ENCODE measurements at regions of chr16 and their contacts with region 1.

Region 1: GRCh38 chr16:68085259-68086071 is at the start of gene NFATC3:
- DNase-seq: peak; percentile 99 to 100
- ATAC-seq: peak; percentile 96
- H3K4me3 ChIP-seq: peak within 1 kb of the TSS; percentile 78 to 81
- H3K27ac ChIP-seq: peak within 1 kb of the TSS; percentile 88 to 93
- H3K4me1 ChIP-seq: no peaks in the 10 kb centered on the region
- H3K27me3 ChIP-seq: no peaks in the 10 kb centered on the region
- total RNA-seq, gene NFATC3: 38.1 to 48.4 TPM

Region 2: GRCh38 chr16:68040507-68041288 is 44.8 kb before region 1 on chr16:
- intact Hi-C with region 1: no loop called
- DNase-seq: peak; percentile 85 to 95
- ATAC-seq: peak; percentile 93
- H3K4me3 ChIP-seq: no peak overlapping the region
- H3K27ac ChIP-seq: no peak overlapping the region
- H3K4me1 ChIP-seq: no peaks in the 10 kb centered on the region
- H3K27me3 ChIP-seq: no peaks in the 10 kb centered on the region

Region 3: DNA sequence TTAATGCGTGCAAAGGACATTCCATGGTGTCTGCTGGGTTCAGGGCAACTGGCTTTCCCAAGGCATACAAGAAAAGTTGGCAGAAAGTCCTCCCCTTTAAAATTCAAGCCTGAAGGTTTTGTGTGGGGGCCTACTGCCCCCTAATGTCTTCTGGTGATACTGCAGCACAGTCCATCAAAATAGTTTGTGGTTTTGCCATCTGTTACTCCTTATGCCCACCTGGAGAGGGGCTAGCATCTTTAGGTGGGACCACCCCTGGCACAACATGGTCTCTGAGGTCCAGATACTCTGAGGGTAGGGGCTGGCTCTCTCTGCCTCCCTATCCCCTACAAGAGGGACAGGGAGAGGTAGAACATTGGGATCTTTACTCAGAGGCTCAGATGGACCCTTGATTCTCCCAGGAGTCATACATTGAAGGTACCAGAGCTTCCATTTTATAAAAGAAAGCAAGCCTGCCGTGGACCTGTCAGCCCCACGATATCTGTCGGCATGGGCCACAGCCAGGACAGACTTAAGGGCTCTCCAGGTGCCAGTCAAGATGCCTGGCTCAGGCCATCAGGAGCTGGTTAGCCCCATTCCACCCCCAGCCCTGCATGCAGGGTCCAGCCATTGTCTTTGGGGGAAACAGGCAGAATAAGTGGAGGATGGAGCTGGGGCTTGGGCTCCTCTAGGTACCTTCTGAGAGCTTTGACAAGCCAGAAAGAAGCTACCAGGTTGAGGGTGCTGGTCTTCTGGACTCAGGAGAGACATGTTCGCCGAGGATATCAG is 144.2 kb after region 1 on chr16:
- intact Hi-C with region 1: loop called (anchors 5 to 10 kb)
- DNase-seq: peak in 1 of 2 donors; percentile 43
- ATAC-seq: peak; percentile 53
- H3K4me3 ChIP-seq: no peak overlapping the region
- H3K27ac ChIP-seq: no peak overlapping the region
- H3K4me1 ChIP-seq: no peaks in the 10 kb centered on the region
- H3K27me3 ChIP-seq: no peaks in the 10 kb centered on the region

Region 4: GRCh38 chr16:68237243-68238028 is 152.0 kb after region 1 on chr16:
- intact Hi-C with region 1: loop called (anchors 5 to 10 kb)
- DNase-seq: peak; percentile 99
- ATAC-seq: peak; percentile 94
- H3K4me3 ChIP-seq: peak overlapping the region; percentile 7 to 29
- H3K27ac ChIP-seq: peak overlapping the region in 1 of 2 donors; percentile 29
- H3K4me1 ChIP-seq: no peaks in the 10 kb centered on the region
- H3K27me3 ChIP-seq: no peaks in the 10 kb centered on the region

Measured in aorta (tissue), 5 donors.